ENCODE measurements at regions of chr16 and their contacts with region 1.

Region 1: GRCh38 chr16:71845639-71846430 is at the start of gene ATXN1L:
- DNase-seq: peak; percentile 89 to 92
- ATAC-seq: peak; percentile 97 to 98 (median 98)
- H3K4me3 ChIP-seq: peak within 1 kb of the TSS; percentile 83 to 100 (median 99)
- H3K27ac ChIP-seq: peak within 1 kb of the TSS; percentile 64 to 97 (median 91)
- H3K4me1 ChIP-seq: peaks cover 0 to 33% (median 22%) of the 10 kb centered on the region in 9 donors
- H3K27me3 ChIP-seq: no peaks in the 10 kb centered on the region
- CTCF ChIP-seq: peak in 2 of 9 donors; percentile 6 to 26
- total RNA-seq, gene ATXN1L: 13.9 to 24.2 (median 19.1) TPM

Region 2: GRCh38 chr16:71781741-71782140 is 64.1 kb before region 1 on chr16:
- intact Hi-C with region 1: loop called in 1 of 10 experiments (anchors 10 kb)
- DNase-seq: no peak
- ATAC-seq: no peak
- H3K4me3 ChIP-seq: no peak overlapping the region
- H3K27ac ChIP-seq: no peak overlapping the region
- H3K4me1 ChIP-seq: peaks cover 0 to 32% (median 6%) of the 10 kb centered on the region in 9 donors
- H3K27me3 ChIP-seq: no peaks in the 10 kb centered on the region
- CTCF ChIP-seq: no peak

Region 3: DNA sequence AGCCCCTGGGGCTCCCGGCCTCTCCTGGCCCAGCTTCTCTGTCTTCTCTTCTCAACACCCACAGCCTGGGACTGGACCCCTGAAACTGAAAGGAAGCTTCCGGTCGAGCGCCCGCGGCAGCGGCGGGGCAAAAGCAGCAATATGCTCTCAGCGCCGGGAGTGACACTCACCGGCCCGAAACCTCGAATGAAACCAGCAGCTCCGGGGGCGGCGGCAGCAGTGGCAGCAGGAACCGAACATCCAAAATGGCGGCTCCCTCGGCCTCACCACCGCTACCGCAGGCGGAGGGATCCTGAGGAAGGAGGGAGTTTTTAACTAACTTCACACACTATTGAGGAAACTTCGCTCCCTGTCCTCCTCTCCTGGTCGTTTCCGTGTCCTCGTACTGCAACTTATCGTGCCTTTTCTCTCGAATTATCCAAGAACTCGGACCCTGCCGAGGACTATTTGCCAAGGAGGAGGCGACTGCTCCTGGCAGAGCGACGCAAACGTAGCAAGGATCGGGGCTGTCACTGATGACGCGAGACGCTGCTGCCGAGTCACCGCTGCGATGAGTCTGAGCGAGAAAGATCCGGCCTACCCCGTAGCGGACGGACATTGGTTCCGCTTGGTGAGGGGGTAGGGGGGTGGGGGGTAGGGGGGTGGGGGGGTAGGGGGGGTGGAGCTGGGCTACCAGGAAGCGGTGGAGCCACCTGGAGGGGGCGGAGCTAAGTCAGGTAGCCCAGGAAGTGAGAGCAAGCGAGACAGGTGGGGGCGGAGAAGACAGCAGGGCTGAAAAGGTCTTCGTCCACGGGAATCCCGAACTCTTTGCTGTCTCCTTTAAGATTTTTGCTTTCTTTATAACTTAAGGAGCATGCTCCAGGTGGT is 37.0 kb before region 1 on chr16 and contains the start of gene AP1G1:
- intact Hi-C with region 1: loop called in 4 of 10 experiments (anchors 1 to 5 kb)
- DNase-seq: peak; percentile 92 to 96
- ATAC-seq: peak; percentile 98 to 99 (median 99)
- H3K4me3 ChIP-seq: peak within 1 kb of the TSS; percentile 70 to 100 (median 97)
- H3K27ac ChIP-seq: peak within 1 kb of the TSS; percentile 92 to 99 (median 98)
- H3K4me1 ChIP-seq: peaks cover 0 to 41% (median 33%) of the 10 kb centered on the region in 9 donors
- H3K27me3 ChIP-seq: no peaks in the 10 kb centered on the region
- CTCF ChIP-seq: no peak
- total RNA-seq, gene AP1G1: 31.2 to 53.7 (median 36.9) TPM

Region 4: GRCh38 chr16:71826533-71827017 is 19.3 kb before region 1 on chr16:
- intact Hi-C with region 1: loop called in 1 of 10 experiments (anchors 1 kb)
- DNase-seq: no peak
- ATAC-seq: no peak
- H3K4me3 ChIP-seq: no peak overlapping the region
- H3K27ac ChIP-seq: no peak overlapping the region
- H3K4me1 ChIP-seq: no peaks in the 10 kb centered on the region
- H3K27me3 ChIP-seq: no peaks in the 10 kb centered on the region
- CTCF ChIP-seq: no peak

Measured in heart right ventricle (tissue), 16 donors.